ENCODE measurements at regions of chr22 and their contacts with region 1.

Region 1: GRCh38 chr22:26483439-26484359 is at the starts of genes HPS4 and SRRD:
- DNase-seq: peak; percentile 93
- H3K4me3 Mint-ChIP-seq: peak within 1 kb of the TSS; percentile 93
- H3K27ac Mint-ChIP-seq: peak within 1 kb of the TSS; percentile 71
- H3K4me1 Mint-ChIP-seq: peaks cover 68% of the 10 kb centered on the region
- H3K27me3 Mint-ChIP-seq: no peaks in the 10 kb centered on the region
- total RNA-seq, gene HPS4: 37.3 to 37.6 TPM
- total RNA-seq, gene SRRD: 17.5 TPM

Region 2: DNA sequence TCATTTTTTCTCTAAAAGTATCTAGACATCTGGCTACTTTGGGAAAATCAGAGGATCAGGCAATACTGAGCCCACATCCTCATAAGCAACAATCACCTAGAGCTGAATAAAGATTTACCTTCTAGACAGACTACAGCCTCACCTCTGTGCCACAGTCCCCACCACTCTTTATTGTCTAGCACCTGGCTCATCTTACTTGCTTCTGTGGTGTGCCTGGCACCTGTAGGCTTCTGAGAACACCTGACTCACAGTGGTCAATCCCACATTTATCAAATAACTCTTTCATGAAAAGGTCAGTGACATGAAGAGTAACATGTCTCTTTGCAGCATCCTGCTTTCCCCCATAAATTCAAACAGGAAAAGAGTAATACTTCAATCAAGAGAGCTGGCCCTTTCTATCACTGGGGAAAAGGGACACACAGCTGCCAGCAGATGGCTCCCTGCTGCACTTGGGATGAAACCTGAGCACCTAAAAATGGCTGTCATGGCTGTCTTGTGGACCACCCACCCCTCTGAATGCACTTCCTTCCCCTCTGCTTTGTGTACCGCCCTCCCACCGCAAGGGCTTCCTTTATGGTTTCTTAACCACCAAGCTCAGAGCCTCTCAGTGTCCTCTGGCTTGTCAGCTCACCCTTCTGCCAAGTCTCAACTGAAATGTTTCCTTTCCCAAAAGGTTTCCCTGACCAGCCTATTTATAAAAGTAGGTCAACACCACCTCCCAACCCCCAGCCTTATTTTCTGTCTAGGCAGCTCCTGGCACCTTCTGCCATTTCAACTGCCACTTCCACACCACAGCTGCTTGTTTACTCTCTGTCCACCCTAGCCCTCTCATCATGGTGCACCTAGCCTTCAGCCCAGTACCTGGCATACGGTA is 19.2 kb after region 1 on chr22:
- CTCF ChIA-PET with region 1: interaction called, 32 read pairs
- POLR2A ChIA-PET with region 1: interaction called, 61 read pairs
- DNase-seq: peak; percentile 89
- H3K4me3 Mint-ChIP-seq: peak overlapping the region; percentile 44
- H3K27ac Mint-ChIP-seq: peak overlapping the region; percentile 94
- H3K4me1 Mint-ChIP-seq: peaks cover 39% of the 10 kb centered on the region
- H3K27me3 Mint-ChIP-seq: no peaks in the 10 kb centered on the region

Region 3: DNA sequence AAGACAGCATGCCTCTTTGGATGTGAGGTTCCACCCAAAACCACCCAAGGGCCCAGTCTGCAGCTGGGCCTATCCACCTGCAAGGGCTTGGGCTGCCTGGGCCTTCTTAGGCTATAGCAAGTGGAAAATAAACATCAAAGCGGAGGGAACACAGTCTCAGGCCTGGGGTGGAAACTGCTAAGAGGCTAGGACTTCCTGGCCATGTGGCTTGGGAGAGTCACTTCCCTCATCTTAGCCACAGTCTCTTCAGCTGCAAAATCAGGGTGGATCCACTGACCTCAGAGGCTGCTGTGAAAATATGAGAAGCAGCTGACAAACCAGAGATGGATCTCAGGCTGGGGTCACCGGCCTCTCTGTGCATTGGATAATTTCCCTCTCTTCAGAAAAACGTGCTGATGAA is 59.1 kb after region 1 on chr22:
- CTCF ChIA-PET with region 1: no interaction called
- POLR2A ChIA-PET with region 1: interaction called, 10 read pairs
- DNase-seq: peak; percentile 56
- H3K4me3 Mint-ChIP-seq: no peak overlapping the region
- H3K27ac Mint-ChIP-seq: peak overlapping the region; percentile 63
- H3K4me1 Mint-ChIP-seq: peaks cover 55% of the 10 kb centered on the region
- H3K27me3 Mint-ChIP-seq: no peaks in the 10 kb centered on the region

Region 4: GRCh38 chr22:26665813-26666231 is 182.1 kb after region 1 on chr22:
- CTCF ChIA-PET with region 1: interaction called, 14 read pairs
- POLR2A ChIA-PET with region 1: interaction called, 92 read pairs
- DNase-seq: no peak
- H3K4me3 Mint-ChIP-seq: no peak overlapping the region
- H3K27ac Mint-ChIP-seq: peak overlapping the region; percentile 84
- H3K4me1 Mint-ChIP-seq: peaks cover 74% of the 10 kb centered on the region
- H3K27me3 Mint-ChIP-seq: no peaks in the 10 kb centered on the region